GM18951 (cell line): ENCODE measurements at regions of chr9 and their contacts with region 1.

Region 1: GRCh38 chr9:76458903-76459690 is at the start of gene GCNT1:
- POLR2A ChIP-seq: peak; percentile 68

Region 2: GRCh38 chr9:76592091-76593010 is 133.3 kb after region 1 on chr9:
- in situ Hi-C with region 1: no loop called
- POLR2A ChIP-seq: no peak

Region 3: GRCh38 chr9:76651119-76651705 is 192.1 kb after region 1 on chr9:
- in situ Hi-C with region 1: loop called (anchors 5 kb)
- POLR2A ChIP-seq: no peak

Region 4: DNA sequence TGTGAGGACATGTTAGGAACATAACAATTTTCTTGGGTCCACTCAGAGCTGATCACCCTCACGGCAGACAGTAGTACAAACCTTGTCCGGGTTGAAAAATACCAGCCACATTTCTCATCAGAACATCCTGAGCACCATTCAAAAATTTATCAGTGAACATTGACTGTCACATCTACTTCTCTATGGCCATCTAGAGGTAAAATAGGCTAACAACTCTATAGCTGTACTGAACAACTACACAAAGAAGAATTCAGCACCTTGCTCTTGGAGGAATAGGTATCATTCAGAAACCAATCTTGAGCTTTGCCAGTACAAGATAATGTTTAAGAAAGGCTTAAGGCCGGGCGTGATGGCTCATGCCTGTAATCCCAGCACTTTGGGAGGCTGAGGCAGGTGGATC is 612.9 kb after region 1 on chr9:
- in situ Hi-C with region 1: no loop called
- POLR2A ChIP-seq: no peak